Heart right ventricle (tissue), 16 donors: ENCODE measurements at regions of chr20 and their contacts with region 1.

Region 1: GRCh38 chr20:653110-653589 is at the start of gene SRXN1:
- DNase-seq: peak; percentile 91 to 93
- ATAC-seq: peak; percentile 92 to 96 (median 96)
- H3K4me3 ChIP-seq: peak within 1 kb of the TSS; percentile 36 to 87 (median 76)
- H3K27ac ChIP-seq: peak within 1 kb of the TSS; percentile 86 to 98 (median 93)
- H3K4me1 ChIP-seq: peaks cover 6 to 48% (median 22%) of the 10 kb centered on the region in 9 donors
- H3K27me3 ChIP-seq: no peaks in the 10 kb centered on the region
- CTCF ChIP-seq: peak; percentile 39 to 79 (median 70)
- total RNA-seq, gene SRXN1: 21.4 to 42.0 (median 30.9) TPM

Region 2: DNA sequence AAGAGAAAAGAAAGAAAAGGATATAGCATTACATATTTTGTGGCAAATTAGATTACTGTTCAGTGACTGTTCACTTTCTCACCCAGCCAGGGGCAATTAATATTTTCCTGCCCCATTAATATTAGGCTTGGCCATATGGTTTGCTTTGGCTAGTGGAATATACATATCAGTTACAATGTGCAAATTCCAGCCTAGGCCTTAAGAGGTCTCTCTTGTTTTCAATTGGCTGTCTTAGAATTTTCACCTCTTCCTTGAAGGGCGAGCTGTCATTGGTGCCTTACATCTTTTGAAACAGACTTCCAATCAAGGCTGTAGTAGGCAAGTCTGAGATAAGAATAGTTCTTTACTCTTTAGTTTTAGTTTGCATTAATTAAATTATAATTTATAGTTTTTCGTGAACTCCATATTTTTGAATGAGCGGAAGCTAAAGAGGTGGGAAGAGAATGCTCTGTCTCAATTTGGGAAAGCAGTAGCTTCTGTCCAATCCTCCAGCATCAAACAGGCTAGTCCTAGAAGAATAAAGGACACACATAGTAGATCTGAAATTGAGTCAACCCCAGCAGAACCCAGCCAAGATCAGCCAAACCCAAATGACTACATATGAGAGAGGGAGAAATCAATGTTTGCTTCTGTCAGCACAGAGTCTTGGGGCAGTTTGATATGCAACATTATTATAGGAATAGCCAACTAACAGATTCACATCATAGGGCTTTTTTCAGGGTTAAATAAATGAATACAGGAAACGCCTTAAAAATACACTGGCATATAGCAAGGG is 103.2 kb before region 1 on chr20:
- intact Hi-C with region 1: loop called in 1 of 10 experiments (anchors 5 kb)
- DNase-seq: no peak
- ATAC-seq: no peak
- H3K4me3 ChIP-seq: no peak overlapping the region
- H3K27ac ChIP-seq: no peak overlapping the region
- H3K4me1 ChIP-seq: peaks cover 0 to 2% (median under 1%) of the 10 kb centered on the region in 9 donors
- H3K27me3 ChIP-seq: peaks cover 0 to 28% (median 0%) of the 10 kb centered on the region in 7 donors
- CTCF ChIP-seq: no peak